CD4-positive, alpha-beta T cell (primary cell): ENCODE measurements at regions of chr11 and their contacts with region 1.

Region 1: GRCh38 chr11:19698493-19699292 is 13.9 kb upstream of the NAV2 start:
- DNase-seq: no peak
- ATAC-seq: no peak
- H3K4me3 ChIP-seq: no peak overlapping the region
- H3K4me3 Mint-ChIP-seq: no peak overlapping the region
- H3K27ac ChIP-seq: no peak overlapping the region
- H3K27ac Mint-ChIP-seq: no peak overlapping the region
- H3K4me1 ChIP-seq: no peaks in the 10 kb centered on the region
- H3K4me1 Mint-ChIP-seq: no peaks in the 10 kb centered on the region
- H3K27me3 ChIP-seq: no peaks in the 10 kb centered on the region
- H3K27me3 Mint-ChIP-seq: peaks cover 25% of the 10 kb centered on the region
- CTCF ChIP-seq: no peak

Region 2: GRCh38 chr11:19419021-19419750 is 279.5 kb before region 1 on chr11:
- CTCF ChIA-PET with region 1: no interaction called
- POLR2A ChIA-PET with region 1: no interaction called
- intact Hi-C with region 1: no loop called
- DNase-seq: no peak
- ATAC-seq: no peak
- H3K4me3 ChIP-seq: no peak overlapping the region
- H3K4me3 Mint-ChIP-seq: no peak overlapping the region
- H3K27ac ChIP-seq: no peak overlapping the region
- H3K27ac Mint-ChIP-seq: no peak overlapping the region
- H3K4me1 ChIP-seq: no peaks in the 10 kb centered on the region
- H3K4me1 Mint-ChIP-seq: no peaks in the 10 kb centered on the region
- H3K27me3 ChIP-seq: no peaks in the 10 kb centered on the region
- H3K27me3 Mint-ChIP-seq: peaks cover 8% of the 10 kb centered on the region
- CTCF ChIP-seq: no peak

Region 3: DNA sequence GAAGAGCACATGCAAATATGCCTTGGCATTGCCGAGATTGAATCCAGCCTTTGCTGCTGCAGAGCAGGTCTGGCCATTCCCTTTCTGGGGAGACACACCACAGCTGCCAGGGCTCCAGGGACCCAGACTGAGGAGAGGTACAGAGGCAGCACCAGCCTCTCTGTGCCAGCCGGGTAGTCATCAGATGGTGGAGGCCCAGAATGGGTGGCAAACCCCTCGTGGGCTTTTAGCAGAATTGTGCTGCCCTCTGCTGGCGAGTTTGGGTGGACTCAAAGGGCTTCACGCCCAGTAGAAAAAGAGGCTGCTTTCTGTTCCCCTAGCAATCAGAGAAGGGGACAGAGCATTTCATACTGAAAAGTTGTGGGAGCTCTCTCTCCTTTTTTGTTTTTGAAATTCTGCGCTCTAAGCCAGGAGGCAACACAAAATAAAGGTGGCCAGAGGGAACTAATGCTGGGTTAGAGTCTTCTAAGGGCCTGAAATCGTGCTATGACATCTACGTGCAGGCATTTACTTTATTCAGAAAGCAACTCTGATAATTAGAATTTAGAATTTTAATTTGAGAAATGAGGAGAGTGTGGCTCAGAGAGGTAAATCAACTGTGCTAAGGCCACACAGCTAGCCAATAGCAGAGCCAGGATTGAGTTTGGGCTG is 144.9 kb before region 1 on chr11:
- CTCF ChIA-PET with region 1: no interaction called
- POLR2A ChIA-PET with region 1: no interaction called
- intact Hi-C with region 1: no loop called
- DNase-seq: peak; percentile 37 to 74 (median 54)
- ATAC-seq: peak; percentile 48
- H3K4me3 ChIP-seq: no peak overlapping the region
- H3K4me3 Mint-ChIP-seq: no peak overlapping the region
- H3K27ac ChIP-seq: no peak overlapping the region
- H3K27ac Mint-ChIP-seq: no peak overlapping the region
- H3K4me1 ChIP-seq: peaks cover 3% of the 10 kb centered on the region
- H3K4me1 Mint-ChIP-seq: no peaks in the 10 kb centered on the region
- H3K27me3 ChIP-seq: peaks cover 0 to 1% of the 10 kb centered on the region in 2 experiments
- H3K27me3 Mint-ChIP-seq: peaks cover 20% of the 10 kb centered on the region
- CTCF ChIP-seq: peak; percentile 75

Region 4: DNA sequence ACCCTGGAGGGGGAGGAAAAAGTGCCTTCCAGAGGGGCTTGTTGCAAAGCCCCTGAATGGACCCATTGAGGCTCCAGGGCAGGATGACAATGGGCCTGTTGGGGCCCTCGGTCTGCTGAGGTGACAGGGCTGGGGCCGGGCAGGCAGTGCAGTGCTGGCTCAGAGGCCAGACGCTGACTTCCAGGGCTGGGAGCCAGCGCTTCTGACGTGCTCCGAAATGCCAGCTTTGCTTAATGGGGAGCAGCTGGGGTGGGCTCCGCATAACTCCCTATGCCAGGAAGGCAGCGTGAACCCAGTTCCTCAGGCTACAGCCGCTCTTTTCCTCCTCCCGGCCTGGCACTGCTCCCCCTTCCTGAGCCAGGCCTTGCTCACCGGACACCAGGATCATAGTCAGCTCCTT is 31.7 kb after region 1 on chr11:
- CTCF ChIA-PET with region 1: no interaction called
- POLR2A ChIA-PET with region 1: no interaction called
- intact Hi-C with region 1: loop called in 1 of 2 experiments (anchors 5 kb)
- DNase-seq: no peak
- ATAC-seq: no peak
- H3K4me3 ChIP-seq: no peak overlapping the region
- H3K4me3 Mint-ChIP-seq: no peak overlapping the region
- H3K27ac ChIP-seq: no peak overlapping the region
- H3K27ac Mint-ChIP-seq: no peak overlapping the region
- H3K4me1 ChIP-seq: no peaks in the 10 kb centered on the region
- H3K4me1 Mint-ChIP-seq: no peaks in the 10 kb centered on the region
- H3K27me3 ChIP-seq: no peaks in the 10 kb centered on the region
- H3K27me3 Mint-ChIP-seq: peaks cover 6% of the 10 kb centered on the region
- CTCF ChIP-seq: no peak